CD8-positive, alpha-beta T cell (primary cell): ENCODE measurements at regions of chr9 and their contacts with region 1.

Region 1: GRCh38 chr9:100352727-100353505 is at the start of gene TEX10:
- DNase-seq: peak; percentile 72 to 93 (median 88)
- ATAC-seq: peak; percentile 89
- H3K4me3 ChIP-seq: peak within 1 kb of the TSS; percentile 90 to 92
- H3K4me3 Mint-ChIP-seq: peak within 1 kb of the TSS; percentile 94
- H3K27ac ChIP-seq: peak within 1 kb of the TSS; percentile 68
- H3K27ac Mint-ChIP-seq: peak within 1 kb of the TSS; percentile 91
- H3K4me1 ChIP-seq: peaks cover 32% of the 10 kb centered on the region
- H3K4me1 Mint-ChIP-seq: peaks cover 60% of the 10 kb centered on the region
- H3K27me3 ChIP-seq: no peaks in the 10 kb centered on the region
- H3K27me3 Mint-ChIP-seq: no peaks in the 10 kb centered on the region
- CTCF ChIP-seq: no peak
- total RNA-seq, gene TEX10: 9.5 to 9.8 TPM

Region 2: GRCh38 chr9:99221621-99222415 is 1131.1 kb before region 1 on chr9 and contains the starts of genes ALG2 and SEC61B:
- CTCF ChIA-PET with region 1: no interaction called
- POLR2A ChIA-PET with region 1: no interaction called
- intact Hi-C with region 1: loop called in 1 of 2 experiments (anchors 5 kb)
- DNase-seq: peak; percentile 87 to 96 (median 94)
- ATAC-seq: peak; percentile 88
- H3K4me3 ChIP-seq: peak within 1 kb of the TSS; percentile 79 to 90
- H3K4me3 Mint-ChIP-seq: peak within 1 kb of the TSS; percentile 99
- H3K27ac ChIP-seq: peak within 1 kb of the TSS; percentile 95 to 99
- H3K27ac Mint-ChIP-seq: peak within 1 kb of the TSS; percentile 100
- H3K4me1 ChIP-seq: peaks cover 30% of the 10 kb centered on the region
- H3K4me1 Mint-ChIP-seq: peaks cover 80% of the 10 kb centered on the region
- H3K27me3 ChIP-seq: no peaks in the 10 kb centered on the region
- H3K27me3 Mint-ChIP-seq: no peaks in the 10 kb centered on the region
- CTCF ChIP-seq: no peak
- total RNA-seq, gene ALG2: 21.0 to 24.7 TPM
- total RNA-seq, gene SEC61B: 107 to 108 TPM

Region 3: GRCh38 chr9:100098887-100099721 is 253.8 kb before region 1 on chr9 and contains the starts of genes ERP44 and INVS:
- CTCF ChIA-PET with region 1: no interaction called
- POLR2A ChIA-PET with region 1: no interaction called
- intact Hi-C with region 1: loop called (anchors 2 to 5 kb)
- DNase-seq: peak; percentile 93 to 99 (median 96)
- ATAC-seq: peak; percentile 99
- H3K4me3 ChIP-seq: peak within 1 kb of the TSS; percentile 95 to 98
- H3K4me3 Mint-ChIP-seq: peak within 1 kb of the TSS; percentile 99
- H3K27ac ChIP-seq: peak within 1 kb of the TSS; percentile 72 to 85
- H3K27ac Mint-ChIP-seq: peak within 1 kb of the TSS; percentile 97
- H3K4me1 ChIP-seq: peaks cover 31% of the 10 kb centered on the region
- H3K4me1 Mint-ChIP-seq: peaks cover 44% of the 10 kb centered on the region
- H3K27me3 ChIP-seq: no peaks in the 10 kb centered on the region
- H3K27me3 Mint-ChIP-seq: no peaks in the 10 kb centered on the region
- CTCF ChIP-seq: no peak
- total RNA-seq, gene ERP44: 7.6 to 8.5 TPM
- total RNA-seq, gene INVS: 12.5 to 13.2 TPM

Region 4: GRCh38 chr9:100411472-100412283 is 58.8 kb after region 1 on chr9:
- CTCF ChIA-PET with region 1: interaction called, 3 read pairs
- POLR2A ChIA-PET with region 1: interaction called, 5 read pairs
- intact Hi-C with region 1: loop called (anchors 1 to 5 kb)
- DNase-seq: peak; percentile 60 to 94 (median 87)
- ATAC-seq: peak; percentile 100
- H3K4me3 ChIP-seq: peak overlapping the region; percentile 42 to 57
- H3K4me3 Mint-ChIP-seq: peak overlapping the region; percentile 94
- H3K27ac ChIP-seq: peak overlapping the region in 1 of 2 experiments; percentile 25
- H3K27ac Mint-ChIP-seq: peak overlapping the region; percentile 83
- H3K4me1 ChIP-seq: peaks cover 9% of the 10 kb centered on the region
- H3K4me1 Mint-ChIP-seq: peaks cover 13% of the 10 kb centered on the region
- H3K27me3 ChIP-seq: peaks cover 0 to 5% of the 10 kb centered on the region in 2 experiments
- H3K27me3 Mint-ChIP-seq: peaks cover 26% of the 10 kb centered on the region
- CTCF ChIP-seq: no peak

Region 5: DNA sequence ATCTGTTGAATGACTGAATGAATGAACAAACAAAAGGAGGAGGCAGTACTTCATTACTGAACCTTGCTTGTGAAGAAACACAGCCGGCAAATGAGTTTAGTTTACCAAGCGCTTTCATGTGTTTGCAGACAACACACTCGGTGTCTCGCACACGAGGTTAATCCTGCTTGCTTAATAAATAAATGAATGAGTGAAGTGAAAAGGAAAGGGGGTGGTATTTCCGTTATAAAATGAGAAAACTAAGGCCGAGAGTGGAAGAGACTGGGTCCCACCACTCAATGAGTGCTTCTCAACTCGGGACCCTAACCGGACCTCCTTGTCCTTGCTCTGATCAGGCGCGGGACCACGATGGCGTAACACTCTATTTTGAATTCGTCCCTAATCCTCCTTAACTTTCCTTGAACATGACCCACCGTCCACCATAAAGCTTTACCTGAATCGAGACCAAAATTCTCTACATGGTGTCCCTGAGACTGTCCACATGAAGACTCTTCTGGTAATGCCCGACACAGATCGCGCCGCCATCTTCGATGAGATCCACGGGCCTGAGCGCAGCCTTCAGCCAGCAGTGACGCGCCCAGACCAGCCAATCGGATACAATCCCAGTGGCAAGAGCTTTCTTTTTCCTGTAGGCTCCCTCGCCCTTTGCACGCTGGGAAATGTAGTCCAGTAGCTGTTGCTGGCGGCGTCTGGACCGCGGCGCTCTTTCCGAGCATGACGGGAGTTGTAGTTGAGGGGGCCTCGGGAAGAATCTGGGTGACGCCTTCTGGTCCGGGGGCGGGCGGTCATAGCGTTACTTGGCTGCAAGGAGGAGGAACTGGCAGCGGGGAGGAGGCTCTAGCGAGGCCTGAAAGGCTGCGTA is 1045.4 kb after region 1 on chr9 and contains the starts of genes MRPL50 and ZNF189:
- CTCF ChIA-PET with region 1: no interaction called
- POLR2A ChIA-PET with region 1: no interaction called
- intact Hi-C with region 1: loop called (anchors 2 kb)
- DNase-seq: peak; percentile 89 to 99 (median 95)
- ATAC-seq: peak; percentile 93
- H3K4me3 ChIP-seq: peak within 1 kb of the TSS; percentile 87 to 91
- H3K4me3 Mint-ChIP-seq: peak within 1 kb of the TSS; percentile 97
- H3K27ac ChIP-seq: peak within 1 kb of the TSS; percentile 96 to 98
- H3K27ac Mint-ChIP-seq: peak within 1 kb of the TSS; percentile 99
- H3K4me1 ChIP-seq: peaks cover 54% of the 10 kb centered on the region
- H3K4me1 Mint-ChIP-seq: peaks cover 80% of the 10 kb centered on the region
- H3K27me3 ChIP-seq: no peaks in the 10 kb centered on the region
- H3K27me3 Mint-ChIP-seq: no peaks in the 10 kb centered on the region
- CTCF ChIP-seq: no peak
- total RNA-seq, gene MRPL50: 7.5 to 8.4 TPM
- total RNA-seq, gene ZNF189: 4.0 to 5.2 TPM